AG04449 (cell line): ENCODE measurements at regions of chr9 and their contacts with region 1.

Region 1: GRCh38 chr9:136363606-136364370 is at the start of gene DNLZ:
- DNase-seq: no peak
- H3K4me3 ChIP-seq: peak within 1 kb of the TSS; percentile 77
- CTCF ChIP-seq: peak; percentile 93

Region 2: GRCh38 chr9:136345281-136346156 is 18.3 kb before region 1 on chr9:
- CTCF ChIA-PET with region 1: interaction called, 34 read pairs
- POLR2A ChIA-PET with region 1: interaction called, 3 read pairs
- DNase-seq: no peak
- H3K4me3 ChIP-seq: no peak overlapping the region
- CTCF ChIP-seq: peak; percentile 52